Body of pancreas (tissue), 4 donors: ENCODE measurements at regions of chr19 and their contacts with region 1.

Region 1: DNA sequence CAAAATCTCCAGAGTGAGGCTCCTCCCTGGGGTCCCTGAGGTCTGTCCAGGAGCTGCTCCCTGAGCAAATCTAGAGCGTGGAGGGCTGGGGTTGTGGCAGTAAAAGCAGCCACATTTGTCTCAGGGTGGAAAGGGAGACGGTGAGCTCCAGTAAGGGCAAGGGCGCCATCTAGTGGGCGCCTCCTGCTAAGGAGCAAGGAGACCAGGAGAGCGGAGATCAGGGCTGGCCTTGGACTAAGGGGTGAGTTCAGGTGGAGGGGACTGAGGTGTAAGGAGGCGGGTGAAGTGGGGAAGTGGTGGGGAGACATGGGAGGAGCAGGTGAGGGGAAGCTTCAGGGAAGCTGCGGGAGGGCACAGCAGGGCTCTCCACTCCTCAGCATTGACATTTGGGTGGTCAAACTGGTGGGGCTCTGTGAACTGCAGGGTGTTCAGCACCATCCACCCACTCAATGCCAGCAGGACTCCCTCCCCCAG is 5.3 kb upstream of the CEACAM21 start:
- DNase-seq: peak; percentile 80 to 86 (median 82)
- ATAC-seq: peak; percentile 77
- H3K4me3 ChIP-seq: no peak overlapping the region
- H3K27ac ChIP-seq: no peak overlapping the region
- H3K4me1 ChIP-seq: no peaks in the 10 kb centered on the region
- H3K27me3 ChIP-seq: peaks cover 0 to 6% of the 10 kb centered on the region in 2 donors
- CTCF ChIP-seq: peak; percentile 70 to 93 (median 87)
- POLR2A ChIP-seq: no peak

Region 2: DNA sequence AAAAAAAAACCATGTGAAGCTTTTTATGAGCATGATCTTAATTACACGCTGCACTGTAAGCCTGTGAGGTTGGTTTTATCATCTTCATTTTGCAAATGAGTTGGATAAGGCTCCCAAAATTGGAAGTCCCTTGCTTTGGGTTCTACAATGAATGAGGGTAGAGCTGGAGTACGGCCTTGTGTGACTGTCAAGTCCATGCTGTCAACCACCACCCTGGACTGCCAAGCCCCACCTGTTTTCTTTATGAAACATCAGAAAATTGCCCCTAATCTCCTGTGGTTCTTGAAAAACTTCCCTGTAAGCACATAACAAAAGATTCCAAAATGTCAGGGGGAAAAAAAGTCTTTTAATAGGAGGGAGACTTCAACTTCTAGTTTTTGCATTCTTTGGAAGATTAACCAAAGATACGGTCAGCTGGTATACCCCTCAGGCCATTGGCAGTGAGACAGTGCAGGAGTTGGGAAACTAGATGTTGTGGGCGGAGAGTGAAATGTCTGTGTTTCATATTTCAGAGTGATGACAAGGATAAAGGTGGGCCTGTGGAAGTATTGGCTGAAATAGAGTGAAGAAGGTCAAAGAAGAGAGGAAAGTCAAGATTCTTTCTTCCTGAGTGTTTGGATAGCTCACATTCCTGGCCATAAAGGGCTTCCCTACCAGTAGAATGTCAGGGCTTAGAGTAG is 538.9 kb before region 1 on chr19:
- intact Hi-C with region 1: no loop called
- DNase-seq: no peak
- ATAC-seq: no peak
- H3K4me3 ChIP-seq: no peak overlapping the region
- H3K27ac ChIP-seq: no peak overlapping the region
- H3K4me1 ChIP-seq: no peaks in the 10 kb centered on the region
- H3K27me3 ChIP-seq: no peaks in the 10 kb centered on the region
- CTCF ChIP-seq: no peak
- POLR2A ChIP-seq: no peak

Region 3: DNA sequence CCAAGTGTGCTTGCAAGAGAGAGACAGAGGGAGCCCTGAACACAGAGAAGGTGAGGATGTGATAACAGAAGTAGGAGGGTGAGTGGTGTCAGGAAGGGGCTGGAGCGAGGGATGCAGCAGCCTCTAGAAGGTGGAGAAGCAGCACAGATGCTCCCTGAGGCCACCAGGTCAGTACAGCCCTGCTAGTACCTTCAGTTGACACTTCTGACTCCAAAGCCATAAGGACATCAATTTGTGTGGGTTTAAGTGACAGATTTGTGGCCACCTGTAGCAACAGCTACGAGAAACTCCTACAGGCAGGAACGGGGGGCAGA is 120.9 kb before region 1 on chr19:
- intact Hi-C with region 1: loop called (anchors 5 kb)
- DNase-seq: no peak
- ATAC-seq: no peak
- H3K4me3 ChIP-seq: no peak overlapping the region
- H3K27ac ChIP-seq: no peak overlapping the region
- H3K4me1 ChIP-seq: peaks cover 7% of the 10 kb centered on the region
- H3K27me3 ChIP-seq: peaks cover 0 to 8% of the 10 kb centered on the region in 2 donors
- CTCF ChIP-seq: no peak
- POLR2A ChIP-seq: no peak

Region 4: GRCh38 chr19:41811036-41811435 is 240.4 kb after region 1 on chr19:
- intact Hi-C with region 1: no loop called
- DNase-seq: peak in 1 of 4 donors; percentile 54
- ATAC-seq: no peak
- H3K4me3 ChIP-seq: no peak overlapping the region
- H3K27ac ChIP-seq: no peak overlapping the region
- H3K4me1 ChIP-seq: no peaks in the 10 kb centered on the region
- H3K27me3 ChIP-seq: no peaks in the 10 kb centered on the region
- CTCF ChIP-seq: no peak
- POLR2A ChIP-seq: no peak